ENCODE measurements at regions of chr3 and their contacts with region 1.

Region 1: DNA sequence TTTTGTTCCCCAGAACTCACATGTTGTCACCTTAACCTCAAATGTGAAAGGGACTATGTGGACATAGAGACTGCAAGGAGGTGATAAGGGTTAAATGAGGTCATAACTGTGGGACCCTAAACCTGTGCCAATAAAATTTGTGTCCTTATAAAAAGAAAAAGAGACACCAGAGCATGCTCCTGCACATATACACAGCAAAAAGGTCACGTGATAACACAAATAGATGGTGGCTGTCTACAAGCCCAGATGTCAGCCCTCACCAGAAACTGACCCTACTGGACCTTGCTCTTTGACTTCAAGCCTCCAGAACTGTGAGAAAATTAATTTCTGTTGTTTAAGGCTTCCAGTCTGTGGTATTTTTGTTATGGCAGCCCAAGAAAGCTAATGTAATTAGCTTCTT is 674.5 kb downstream of the VGLL3 start:
- DNase-seq: no peak
- H3K4me3 ChIP-seq: no peak overlapping the region
- H3K27ac ChIP-seq: no peak overlapping the region
- H3K4me1 ChIP-seq: no peaks in the 10 kb centered on the region
- CTCF ChIP-seq: no peak

Region 2: DNA sequence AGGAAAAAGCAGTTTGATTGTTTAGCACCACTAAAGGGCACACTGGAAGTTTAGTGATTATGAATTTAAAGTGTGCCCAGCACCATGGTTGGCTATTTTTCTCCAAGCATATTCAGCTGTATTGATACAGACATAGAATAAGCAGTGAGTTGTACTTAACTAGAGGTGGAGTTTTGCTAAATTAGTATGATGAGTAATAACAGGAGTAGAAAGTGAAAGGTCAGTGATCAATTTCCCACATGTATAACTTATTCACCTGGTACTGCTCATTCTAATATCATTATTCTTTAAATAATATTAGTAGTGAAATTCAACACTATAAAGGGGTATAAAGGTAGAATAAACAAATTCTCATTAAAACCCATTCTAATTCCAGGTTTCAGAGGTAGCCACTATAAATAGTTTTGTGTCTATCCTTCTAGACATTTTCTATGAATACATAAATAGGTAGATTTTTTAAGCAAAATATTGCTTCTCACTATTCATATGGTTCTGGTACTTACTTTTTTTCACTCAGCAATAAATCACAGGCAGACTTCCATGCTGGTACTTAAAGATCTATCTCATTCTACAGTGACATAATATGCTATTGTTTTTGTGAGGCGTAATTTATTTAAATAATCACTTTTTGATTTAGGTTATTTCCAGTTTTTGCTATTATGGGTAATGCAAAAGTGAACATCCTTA is 58.4 kb before region 1 on chr3:
- CTCF ChIA-PET with region 1: no interaction called
- POLR2A ChIA-PET with region 1: no interaction called
- intact Hi-C with region 1: loop called (anchors 10 kb)
- DNase-seq: no peak
- H3K4me3 ChIP-seq: no peak overlapping the region
- H3K27ac ChIP-seq: no peak overlapping the region
- H3K4me1 ChIP-seq: no peaks in the 10 kb centered on the region
- CTCF ChIP-seq: no peak

Region 3: GRCh38 chr3:86673991-86674390 is 357.5 kb after region 1 on chr3:
- CTCF ChIA-PET with region 1: no interaction called
- POLR2A ChIA-PET with region 1: no interaction called
- intact Hi-C with region 1: no loop called
- DNase-seq: no peak
- H3K4me3 ChIP-seq: no peak overlapping the region
- H3K27ac ChIP-seq: no peak overlapping the region
- H3K4me1 ChIP-seq: no peaks in the 10 kb centered on the region
- CTCF ChIP-seq: no peak